ENCODE measurements at regions of chr1 and their contacts with region 1.

Region 1: DNA sequence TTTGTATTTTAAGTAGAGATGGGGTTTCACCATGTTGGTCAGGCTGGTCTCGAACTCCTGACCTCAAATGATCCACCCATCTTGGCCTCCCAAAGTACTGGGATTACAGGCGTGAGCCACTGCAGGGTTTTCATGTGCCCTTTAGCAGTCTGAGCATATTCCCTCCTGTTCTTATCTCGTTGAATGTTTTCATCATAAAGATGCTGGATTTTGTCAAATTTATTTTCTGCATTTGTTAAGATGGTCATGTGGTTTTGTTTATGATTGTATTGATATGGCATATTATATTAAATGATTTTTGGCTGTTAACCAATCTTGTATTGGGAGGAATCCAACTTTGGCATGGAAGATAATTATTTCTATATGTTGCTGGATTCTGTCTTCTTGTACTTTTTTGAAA is 8.8 kb downstream of the JMJD4 start:
- DNase-seq: no peak
- CTCF ChIP-seq: no peak

Region 2: GRCh38 chr1:226186124-226187018 is 1539.9 kb before region 1 on chr1 and contains the start of gene ACBD3:
- CTCF ChIA-PET with region 1: no interaction called
- POLR2A ChIA-PET with region 1: interaction called, 10 read pairs
- DNase-seq: peak; percentile 96
- CTCF ChIP-seq: no peak

Region 3: GRCh38 chr1:227787513-227788270 is 61.4 kb after region 1 on chr1:
- CTCF ChIA-PET with region 1: no interaction called
- POLR2A ChIA-PET with region 1: no interaction called
- DNase-seq: peak; percentile 97
- CTCF ChIP-seq: no peak

Measured in GM10248 (cell line).